H1 (cell line): ENCODE measurements at regions of chr1 and their contacts with region 1.

Region 1: GRCh38 chr1:161726596-161727457 is 5.5 kb downstream of the FCRLB start:
- DNase-seq: peak in 1 of 2 experiments; percentile 85
- H3K4me3 ChIP-seq: peak overlapping the region; percentile 78 to 86 (median 85)
- H3K27ac ChIP-seq: peak overlapping the region; percentile 45; the same call in 1 of the 2 replicates
- H3K4me1 ChIP-seq: peaks cover 2 to 8% (median 4%) of the 10 kb centered on the region in 4 experiments
- H3K27me3 ChIP-seq: peaks cover 12 to 25% (median 22%) of the 10 kb centered on the region in 4 experiments
- CTCF ChIP-seq: no peak
- EP300 ChIP-seq: no peak
- POLR2A ChIP-seq: peak in 1 of 2 experiments; percentile 58; a peak in 2 of 3 replicates
- RAD21 ChIP-seq: no peak

Region 2: DNA sequence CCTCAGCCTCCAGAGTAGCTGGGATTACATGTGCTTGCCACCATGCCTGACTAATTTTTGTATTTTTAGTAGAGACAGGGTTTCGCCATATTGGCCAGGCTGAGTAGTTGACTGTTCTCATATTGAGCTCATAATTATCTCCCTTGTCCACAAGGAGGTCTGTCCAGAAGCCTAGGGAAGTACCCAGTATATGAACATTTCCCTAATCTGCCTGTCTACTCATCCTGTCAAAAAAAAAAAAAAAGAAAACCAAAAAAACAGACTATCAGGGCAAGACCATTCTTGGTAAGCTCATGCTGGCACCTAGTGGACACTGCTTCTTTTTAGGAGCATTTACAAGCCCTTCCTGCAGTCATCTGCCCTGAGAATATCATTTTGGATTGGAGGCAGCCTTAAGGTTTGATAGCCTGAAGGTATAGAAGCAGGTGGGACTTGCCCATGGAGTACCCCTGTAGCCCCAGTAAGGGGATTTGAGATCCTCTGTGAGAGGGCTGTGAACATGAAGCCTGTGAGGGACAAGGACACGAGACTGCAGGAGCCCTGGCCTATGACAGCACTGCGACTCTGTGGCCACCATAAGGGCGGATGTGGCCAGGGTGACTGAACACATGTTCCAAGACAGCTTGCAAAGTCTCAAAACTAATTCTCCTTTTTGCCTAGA is 11.9 kb after region 1 on chr1:
- CTCF ChIA-PET with region 1: interaction called, 52 read pairs
- POLR2A ChIA-PET with region 1: interaction called, 27 read pairs
- DNase-seq: no peak
- H3K4me3 ChIP-seq: no peak overlapping the region
- H3K27ac ChIP-seq: no peak overlapping the region
- H3K4me1 ChIP-seq: peaks cover 1 to 14% (median 4%) of the 10 kb centered on the region in 4 experiments; a peak in 4 of 7 replicates
- H3K27me3 ChIP-seq: no peaks in the 10 kb centered on the region
- CTCF ChIP-seq: peak in 2 of 3 experiments; percentile 61 to 72; a peak in 3 of 4 replicates
- EP300 ChIP-seq: no peak
- POLR2A ChIP-seq: no peak
- RAD21 ChIP-seq: peak; percentile 89 to 92

Region 3: GRCh38 chr1:161855260-161855659 is 128.4 kb after region 1 on chr1:
- CTCF ChIA-PET with region 1: no interaction called
- POLR2A ChIA-PET with region 1: no interaction called
- DNase-seq: no peak
- H3K4me3 ChIP-seq: no peak overlapping the region
- H3K27ac ChIP-seq: no peak overlapping the region
- H3K4me1 ChIP-seq: no peaks in the 10 kb centered on the region
- H3K27me3 ChIP-seq: no peaks in the 10 kb centered on the region
- CTCF ChIP-seq: no peak
- EP300 ChIP-seq: no peak
- POLR2A ChIP-seq: no peak
- RAD21 ChIP-seq: no peak